AG04450 (cell line): ENCODE measurements at regions of chr7 and their contacts with region 1.

Region 1: DNA sequence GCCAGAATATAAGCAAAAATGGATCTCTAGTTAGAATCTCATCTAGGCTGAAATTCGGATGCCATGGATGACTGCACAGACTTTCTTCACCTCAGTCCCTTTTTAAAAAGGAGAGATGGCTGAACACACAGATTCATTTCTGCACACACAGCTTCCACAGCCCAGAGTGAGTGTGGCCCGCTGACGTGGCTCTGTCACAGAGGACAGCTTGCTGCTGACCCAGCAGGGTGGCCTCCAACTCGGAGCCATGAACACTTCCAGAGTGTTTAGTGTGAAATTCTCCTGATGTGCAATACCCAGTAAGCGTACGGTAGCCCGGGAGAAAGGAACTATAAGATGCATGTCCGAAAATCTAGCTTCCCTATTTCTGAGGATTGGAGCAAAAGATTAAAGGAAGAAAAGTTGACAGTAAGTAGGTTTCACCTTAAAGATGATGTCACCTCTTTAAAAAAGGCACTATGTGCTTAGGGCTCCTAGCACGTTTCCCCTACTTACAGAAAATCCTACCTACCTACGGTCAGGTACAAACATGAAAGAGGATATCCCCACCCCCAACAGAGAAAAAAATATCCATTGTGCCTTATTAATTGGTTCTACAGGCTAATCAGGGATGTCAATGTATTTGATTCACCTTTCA is 162.2 kb downstream of the RAPGEF5 start:
- DNase-seq: no peak
- H3K4me3 ChIP-seq: no peak overlapping the region
- H3K27ac ChIP-seq: no peak overlapping the region
- H3K27me3 ChIP-seq: no peaks in the 10 kb centered on the region
- CTCF ChIP-seq: no peak

Region 2: GRCh38 chr7:21819048-21819447 is 375.7 kb before region 1 on chr7:
- CTCF ChIA-PET with region 1: no interaction called
- POLR2A ChIA-PET with region 1: no interaction called
- DNase-seq: no peak
- H3K4me3 ChIP-seq: no peak overlapping the region
- H3K27ac ChIP-seq: no peak overlapping the region
- H3K27me3 ChIP-seq: no peaks in the 10 kb centered on the region
- CTCF ChIP-seq: no peak

Region 3: DNA sequence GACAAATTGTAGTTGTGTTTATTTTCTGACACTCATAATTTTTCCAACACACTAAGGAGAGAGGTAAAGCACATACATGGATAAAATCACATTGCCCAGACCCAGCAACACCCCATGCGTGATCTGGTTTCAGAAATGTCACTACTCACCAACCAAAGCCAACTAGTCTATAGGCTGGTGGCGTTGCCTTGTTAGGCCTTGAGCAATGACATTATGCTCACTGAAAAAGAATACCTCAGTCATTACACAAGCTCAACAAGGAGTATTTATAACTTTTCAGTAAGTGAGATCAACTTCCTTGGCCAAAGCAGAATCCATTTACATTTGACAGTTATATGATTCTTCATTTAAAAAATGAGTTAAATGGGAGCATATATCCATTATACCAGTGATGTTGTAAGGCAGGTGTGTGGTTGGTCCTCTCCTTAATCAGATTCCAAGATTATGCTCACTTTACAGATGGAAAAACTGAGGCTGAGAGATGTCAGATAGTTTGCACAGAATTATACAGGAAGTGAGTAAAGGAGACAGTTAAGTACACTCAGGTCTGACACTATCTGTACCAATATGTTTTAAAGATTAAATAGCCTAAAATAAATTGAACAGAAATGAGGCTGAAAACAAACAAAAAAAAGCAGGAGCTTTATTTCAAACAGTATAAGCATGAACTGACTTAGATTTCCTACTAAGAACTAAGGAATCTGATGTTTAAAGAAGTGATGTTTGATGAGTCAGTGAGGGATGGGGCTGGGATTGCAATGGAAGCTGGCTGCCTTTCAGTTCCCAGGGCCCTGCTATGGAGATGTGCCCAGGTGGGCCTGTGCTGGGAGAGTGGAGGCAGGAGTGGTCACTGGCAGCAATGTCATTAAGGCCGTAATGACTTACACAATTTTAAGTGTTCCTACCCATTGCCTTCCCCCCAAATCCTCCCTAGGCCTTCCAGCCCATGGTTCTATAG is 43.9 kb after region 1 on chr7:
- CTCF ChIA-PET with region 1: interaction called, 11 read pairs
- POLR2A ChIA-PET with region 1: no interaction called
- DNase-seq: peak; percentile 47
- H3K4me3 ChIP-seq: no peak overlapping the region
- H3K27ac ChIP-seq: no peak overlapping the region
- H3K27me3 ChIP-seq: no peaks in the 10 kb centered on the region
- CTCF ChIP-seq: no peak